Heart right ventricle (tissue), 16 donors: ENCODE measurements at regions of chr9 and their contacts with region 1.

Region 1: DNA sequence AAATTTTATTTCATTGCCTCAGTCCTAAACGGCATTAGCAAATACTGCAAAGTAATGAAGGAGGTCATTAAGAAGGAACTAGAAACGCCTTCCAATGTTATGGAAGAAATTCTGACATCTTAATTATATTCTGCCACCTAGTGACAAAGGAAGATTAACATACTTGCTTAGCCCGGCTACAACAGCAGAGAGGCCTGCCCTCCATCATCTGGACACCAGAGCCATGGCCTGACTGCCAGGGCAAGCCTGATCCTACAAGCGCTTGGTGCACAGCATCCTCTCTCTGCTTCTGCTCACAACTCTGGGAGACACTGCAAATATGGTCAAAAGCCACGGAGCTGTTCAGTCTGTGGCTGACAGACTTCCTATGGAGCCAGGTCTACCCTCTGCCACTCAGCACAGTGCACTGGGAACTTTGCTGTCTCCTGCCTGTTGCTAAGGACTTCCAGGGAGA is 87.3 kb upstream of the SLC44A1 start:
- DNase-seq: peak; percentile 42 to 50
- ATAC-seq: peak; percentile 86 to 93 (median 88)
- H3K4me3 ChIP-seq: no peak overlapping the region
- H3K27ac ChIP-seq: peak overlapping the region in 2 of 10 donors; percentile 2 to 7
- H3K4me1 ChIP-seq: peaks cover 0 to 32% (median 4%) of the 10 kb centered on the region in 9 donors
- H3K27me3 ChIP-seq: no peaks in the 10 kb centered on the region
- CTCF ChIP-seq: peak in 8 of 9 donors; percentile 49 to 73 (median 64)

Region 2: GRCh38 chr9:104527109-104527508 is 630.0 kb before region 1 on chr9 and contains the start of gene OR13C4:
- intact Hi-C with region 1: no loop called
- DNase-seq: no peak
- ATAC-seq: no peak
- H3K4me3 ChIP-seq: no peak within 1 kb of the TSS
- H3K27ac ChIP-seq: no peak within 1 kb of the TSS
- H3K4me1 ChIP-seq: no peaks in the 10 kb centered on the region
- H3K27me3 ChIP-seq: no peaks in the 10 kb centered on the region
- CTCF ChIP-seq: no peak
- total RNA-seq, gene OR13C4: not detected

Region 3: DNA sequence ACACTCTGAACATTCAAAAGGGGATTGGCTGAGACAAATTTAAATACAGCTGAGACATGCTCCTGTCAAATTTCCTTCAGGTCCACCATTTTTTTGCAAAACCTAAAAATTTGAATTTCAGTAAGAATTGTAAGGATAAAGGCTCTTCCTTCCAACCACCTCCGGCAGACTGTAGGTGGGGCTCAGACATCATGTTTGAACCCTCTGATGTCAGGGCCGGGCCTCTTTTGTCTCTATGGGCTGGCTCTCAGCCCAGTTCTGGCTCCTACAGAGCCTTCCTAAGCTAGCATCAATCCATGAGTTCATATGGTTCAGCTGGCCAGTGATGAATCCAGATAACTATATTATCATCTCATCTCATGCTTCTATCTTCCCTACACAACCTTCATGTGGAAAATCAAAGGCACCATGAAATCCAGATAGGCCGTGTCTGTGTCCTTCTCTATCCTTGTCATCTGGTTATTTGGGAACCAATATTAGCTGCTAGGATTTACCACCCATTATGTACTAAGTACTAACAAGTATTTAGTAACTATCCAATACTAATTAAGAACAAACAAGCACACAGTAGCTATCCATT is 349.0 kb before region 1 on chr9:
- intact Hi-C with region 1: loop called in 1 of 10 experiments (anchors 10 kb)
- DNase-seq: peak in 1 of 2 donors; percentile 30
- ATAC-seq: peak in 6 of 8 donors; percentile 54 to 74 (median 66)
- H3K4me3 ChIP-seq: no peak overlapping the region
- H3K27ac ChIP-seq: no peak overlapping the region
- H3K4me1 ChIP-seq: peaks cover 0 to 13% (median 0%) of the 10 kb centered on the region in 9 donors
- H3K27me3 ChIP-seq: no peaks in the 10 kb centered on the region
- CTCF ChIP-seq: peak in 7 of 9 donors; percentile 29 to 58 (median 48)

Region 4: DNA sequence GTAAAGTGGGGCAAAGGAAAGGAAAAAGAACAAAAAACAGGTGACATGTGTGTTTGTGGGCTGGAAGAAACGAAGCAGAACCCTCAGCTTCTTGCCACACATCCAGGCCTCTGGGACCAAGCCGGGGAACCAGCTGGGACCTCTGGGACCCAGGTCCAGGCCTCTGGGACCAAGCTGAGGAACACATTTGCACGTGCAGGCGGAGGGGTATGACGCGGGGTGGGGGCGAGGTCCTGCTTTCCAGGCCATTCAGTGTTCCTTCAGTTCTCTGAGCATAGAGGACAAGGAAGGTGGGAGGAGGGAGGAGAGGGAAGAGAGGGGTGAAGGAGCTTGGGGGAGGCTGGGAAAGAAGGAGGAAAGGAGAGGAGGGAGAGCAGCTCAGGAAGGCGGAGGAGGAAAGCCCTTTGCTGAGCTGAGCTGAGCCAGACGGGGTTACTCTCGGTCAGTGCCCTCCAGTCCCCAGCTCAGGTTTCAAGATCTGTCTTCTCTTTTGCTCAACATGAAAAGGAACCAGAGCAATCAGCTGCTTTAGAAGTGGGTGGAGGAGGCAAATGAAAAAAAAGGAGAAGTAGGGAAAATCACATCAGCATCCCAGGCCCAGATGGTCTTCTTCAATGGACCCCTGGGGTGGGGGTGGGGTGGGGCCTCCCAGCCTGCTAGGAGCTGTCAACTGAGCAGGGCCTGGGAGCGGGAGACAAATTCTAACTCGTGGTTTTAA is 288.3 kb before region 1 on chr9:
- intact Hi-C with region 1: loop called in 6 of 10 experiments (anchors 5 to 10 kb)
- DNase-seq: peak; percentile 52 to 69
- ATAC-seq: peak; percentile 88 to 92 (median 90)
- H3K4me3 ChIP-seq: no peak overlapping the region
- H3K27ac ChIP-seq: peak overlapping the region in 9 of 10 donors; percentile 30 to 82 (median 70)
- H3K4me1 ChIP-seq: peaks cover 22 to 84% (median 51%) of the 10 kb centered on the region in 9 donors
- H3K27me3 ChIP-seq: no peaks in the 10 kb centered on the region
- CTCF ChIP-seq: no peak

Region 5: GRCh38 chr9:104991144-104991953 is 165.8 kb before region 1 on chr9:
- intact Hi-C with region 1: loop called in 2 of 10 experiments (anchors 5 to 10 kb)
- DNase-seq: peak; percentile 90 to 93
- ATAC-seq: peak; percentile 85 to 93 (median 89)
- H3K4me3 ChIP-seq: peak overlapping the region; percentile 46 to 70 (median 66)
- H3K27ac ChIP-seq: peak overlapping the region; percentile 87 to 97 (median 94)
- H3K4me1 ChIP-seq: peaks cover 19 to 58% (median 38%) of the 10 kb centered on the region in 9 donors
- H3K27me3 ChIP-seq: no peaks in the 10 kb centered on the region
- CTCF ChIP-seq: peak in 1 of 9 donors; percentile 5

Region 6: GRCh38 chr9:105405514-105406131 is 248.5 kb after region 1 on chr9:
- intact Hi-C with region 1: loop called in 3 of 10 experiments (anchors 5 to 10 kb)
- DNase-seq: no peak
- ATAC-seq: no peak
- H3K4me3 ChIP-seq: no peak overlapping the region
- H3K27ac ChIP-seq: no peak overlapping the region
- H3K4me1 ChIP-seq: peaks cover 0 to 9% (median 0%) of the 10 kb centered on the region in 9 donors
- H3K27me3 ChIP-seq: no peaks in the 10 kb centered on the region
- CTCF ChIP-seq: no peak